Vagina (tissue), 2 donors: ENCODE measurements at regions of chr13 and their contacts with region 1.

Region 1: DNA sequence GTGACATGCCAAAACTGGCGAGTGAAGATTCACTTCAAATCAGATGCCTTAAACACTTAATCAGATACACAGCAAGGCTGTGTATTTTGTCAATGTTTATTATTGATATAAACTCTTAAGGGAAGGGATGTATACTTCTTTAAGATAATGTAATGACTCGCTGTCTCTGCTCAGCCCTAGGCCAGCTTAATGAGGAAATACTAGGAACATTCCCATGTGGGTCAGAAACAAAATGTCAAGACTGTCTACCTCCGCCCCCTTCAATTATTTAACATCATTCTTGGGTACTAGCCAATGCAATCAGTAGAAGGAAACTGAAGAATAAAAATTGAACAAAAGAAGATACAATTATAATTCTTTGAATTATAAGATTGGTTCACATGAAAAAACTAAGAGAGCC is 33.9 kb upstream of the SERPINE3 start:
- DNase-seq: no peak
- H3K4me3 ChIP-seq: no peak overlapping the region
- H3K27ac ChIP-seq: no peak overlapping the region
- H3K4me1 ChIP-seq: no peaks in the 10 kb centered on the region
- H3K27me3 ChIP-seq: no peaks in the 10 kb centered on the region
- CTCF ChIP-seq: no peak
- POLR2A ChIP-seq: no peak

Region 2: DNA sequence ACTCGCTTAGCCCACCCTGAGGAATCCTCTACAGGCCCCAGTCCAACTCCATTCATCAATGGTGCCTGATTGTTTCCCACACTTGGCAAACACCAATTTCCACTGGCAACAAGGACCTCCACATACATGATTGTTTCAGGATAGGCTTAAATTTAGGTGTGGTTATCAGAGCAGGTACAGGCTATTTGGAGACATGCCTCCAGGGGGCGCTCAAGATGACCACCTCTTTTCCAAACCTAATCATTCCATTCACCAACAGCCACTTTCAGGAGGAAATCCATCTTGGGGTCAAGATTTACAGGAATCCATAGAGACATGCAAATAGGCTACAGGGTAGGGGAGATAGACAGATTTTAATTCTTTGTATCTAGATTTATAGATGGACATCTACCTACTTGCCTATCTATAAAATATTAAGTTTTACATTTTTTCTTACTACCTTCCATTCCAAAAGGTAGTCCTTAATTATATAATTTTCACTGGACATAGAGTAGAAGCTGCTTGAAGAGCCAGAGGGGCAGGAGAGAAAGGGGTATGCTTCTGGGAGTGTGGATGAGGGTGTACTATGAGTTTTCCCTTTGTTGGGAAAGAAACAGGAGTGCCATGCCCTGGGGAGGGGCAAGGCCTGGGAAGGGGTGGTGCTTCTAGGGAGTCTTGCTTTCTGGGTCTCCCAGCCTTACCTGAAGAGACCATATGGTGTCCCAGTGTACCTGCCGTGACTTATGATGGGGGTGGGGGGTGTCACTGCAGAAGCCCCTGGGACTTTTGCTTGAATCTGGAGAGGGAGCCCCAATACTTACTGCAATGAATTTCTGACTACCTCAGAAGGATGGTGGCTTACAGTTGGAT is 1557.0 kb after region 1 on chr13:
- intact Hi-C with region 1: loop called (anchors 5 kb)
- DNase-seq: no peak
- H3K4me3 ChIP-seq: no peak overlapping the region
- H3K27ac ChIP-seq: no peak overlapping the region
- H3K4me1 ChIP-seq: no peaks in the 10 kb centered on the region
- H3K27me3 ChIP-seq: no peaks in the 10 kb centered on the region
- CTCF ChIP-seq: no peak
- POLR2A ChIP-seq: no peak